ENCODE measurements at regions of chr10 and their contacts with region 1.

Region 1: DNA sequence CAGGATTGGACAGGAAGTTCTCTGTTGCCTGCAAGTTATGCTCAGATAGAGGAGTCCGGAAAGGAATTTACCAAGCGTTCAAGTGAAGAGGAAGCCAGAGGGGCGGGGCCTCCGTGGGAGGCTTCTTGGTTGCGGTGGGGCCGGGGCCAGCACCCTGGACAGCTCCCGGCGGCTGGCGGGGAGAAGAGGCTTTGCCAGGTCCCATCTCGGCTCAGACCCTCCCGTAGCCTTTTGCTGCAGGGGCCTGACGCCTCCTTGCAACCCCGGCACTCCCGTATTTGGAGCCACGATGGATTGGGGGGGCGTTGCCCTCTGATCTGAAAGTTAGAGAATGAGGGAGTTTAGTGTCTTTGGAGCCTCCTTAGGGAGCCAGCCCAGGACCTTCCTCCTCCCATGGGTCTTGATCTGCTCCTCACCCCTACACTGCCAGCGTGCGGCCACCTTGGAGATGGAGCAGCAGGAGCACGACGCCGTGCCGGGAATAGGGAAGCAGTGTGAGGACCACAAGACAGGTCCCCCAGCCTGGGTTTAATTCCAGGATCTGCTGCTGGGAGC is 3.1 kb upstream of the SLC18A3 start:
- DNase-seq: peak; percentile 95
- H3K4me3 Mint-ChIP-seq: no peak overlapping the region
- H3K27ac Mint-ChIP-seq: no peak overlapping the region
- H3K4me1 Mint-ChIP-seq: peaks cover 3% of the 10 kb centered on the region
- H3K27me3 Mint-ChIP-seq: peaks cover 42% of the 10 kb centered on the region

Region 2: GRCh38 chr10:49398000-49398861 is 208.8 kb before region 1 on chr10:
- intact Hi-C with region 1: loop called (anchors 5 kb)
- DNase-seq: peak; percentile 87
- H3K4me3 Mint-ChIP-seq: peak overlapping the region; percentile 2
- H3K27ac Mint-ChIP-seq: no peak overlapping the region
- H3K4me1 Mint-ChIP-seq: peaks cover 2% of the 10 kb centered on the region
- H3K27me3 Mint-ChIP-seq: peaks cover 68% of the 10 kb centered on the region

Region 3: DNA sequence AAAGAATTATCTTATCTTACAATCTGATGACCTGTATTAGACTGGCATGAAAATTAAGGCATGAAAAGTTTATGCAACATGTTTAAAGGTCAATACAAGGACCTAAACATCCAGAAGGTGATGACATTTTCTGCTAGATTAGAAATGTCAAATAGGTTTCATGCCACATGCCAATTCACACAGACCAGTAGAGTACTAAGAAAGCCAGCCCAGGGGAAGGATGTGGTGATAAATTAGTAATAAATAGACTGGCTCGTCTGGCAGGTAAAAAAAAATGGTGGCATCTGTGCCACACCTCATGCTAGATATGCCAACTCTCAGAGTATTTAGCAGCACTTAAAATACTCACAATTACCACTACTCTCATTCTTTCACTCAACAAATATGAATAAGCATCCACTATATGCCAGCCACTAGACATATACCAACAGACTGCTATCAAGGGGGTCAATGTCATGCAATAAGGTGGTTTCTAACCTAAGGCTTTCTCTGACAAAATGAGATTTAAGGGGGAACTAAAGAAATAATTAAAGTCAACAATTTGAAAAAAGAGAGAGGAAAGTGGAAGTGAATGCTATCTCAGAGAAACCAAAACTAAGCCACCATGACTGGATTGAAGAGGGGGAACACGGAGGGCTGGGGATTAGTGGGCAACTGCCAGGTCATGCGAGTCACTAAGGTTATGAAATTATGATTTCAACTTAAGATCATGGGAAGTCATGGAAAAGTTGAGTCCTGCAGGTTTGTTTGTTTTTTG is 933.2 kb after region 1 on chr10:
- intact Hi-C with region 1: no loop called
- DNase-seq: peak; percentile 71
- H3K4me3 Mint-ChIP-seq: peak overlapping the region; percentile 63
- H3K27ac Mint-ChIP-seq: peak overlapping the region; percentile 87
- H3K4me1 Mint-ChIP-seq: peaks cover 72% of the 10 kb centered on the region
- H3K27me3 Mint-ChIP-seq: no peaks in the 10 kb centered on the region